ENCODE measurements at regions of chr10 and their contacts with region 1.

Region 1: DNA sequence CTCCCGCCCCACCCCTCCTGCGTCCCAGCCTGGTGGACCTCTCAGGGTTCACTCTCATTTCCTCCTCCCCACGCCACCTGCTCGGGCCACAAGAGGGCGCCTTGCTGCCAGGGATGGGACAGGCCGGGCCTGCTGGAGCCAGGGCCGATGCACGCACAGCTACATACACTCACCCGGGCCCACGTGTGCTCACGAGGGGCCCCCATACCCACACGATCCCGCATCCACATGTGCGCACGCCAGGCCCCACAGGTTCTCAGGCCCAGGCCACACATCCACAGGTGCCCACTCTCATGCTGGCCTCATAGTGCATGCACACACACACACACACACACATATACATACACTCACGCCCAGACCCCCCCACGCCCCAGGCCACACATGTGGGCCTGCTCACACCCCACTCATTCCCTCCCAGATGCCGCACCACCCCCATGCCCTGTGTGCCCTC is 68.6 kb downstream of the LHPP start:
- DNase-seq: peak; percentile 91
- H3K4me3 Mint-ChIP-seq: no peak overlapping the region
- H3K27ac Mint-ChIP-seq: no peak overlapping the region
- H3K4me1 Mint-ChIP-seq: peaks cover 6% of the 10 kb centered on the region
- H3K27me3 Mint-ChIP-seq: no peaks in the 10 kb centered on the region

Region 2: GRCh38 chr10:124612611-124613498 is 82.6 kb after region 1 on chr10:
- CTCF ChIA-PET with region 1: interaction called, 3 read pairs
- POLR2A ChIA-PET with region 1: no interaction called
- intact Hi-C with region 1: loop called (anchors 5 kb)
- DNase-seq: peak; percentile 39
- H3K4me3 Mint-ChIP-seq: no peak overlapping the region
- H3K27ac Mint-ChIP-seq: no peak overlapping the region
- H3K4me1 Mint-ChIP-seq: peaks cover 34% of the 10 kb centered on the region
- H3K27me3 Mint-ChIP-seq: no peaks in the 10 kb centered on the region

Region 3: GRCh38 chr10:124641282-124642087 is 111.2 kb after region 1 on chr10:
- CTCF ChIA-PET with region 1: no interaction called
- POLR2A ChIA-PET with region 1: no interaction called
- intact Hi-C with region 1: no loop called
- DNase-seq: peak; percentile 76
- H3K4me3 Mint-ChIP-seq: peak overlapping the region; percentile 54
- H3K27ac Mint-ChIP-seq: peak overlapping the region; percentile 94
- H3K4me1 Mint-ChIP-seq: peaks cover 78% of the 10 kb centered on the region
- H3K27me3 Mint-ChIP-seq: no peaks in the 10 kb centered on the region

Region 4: DNA sequence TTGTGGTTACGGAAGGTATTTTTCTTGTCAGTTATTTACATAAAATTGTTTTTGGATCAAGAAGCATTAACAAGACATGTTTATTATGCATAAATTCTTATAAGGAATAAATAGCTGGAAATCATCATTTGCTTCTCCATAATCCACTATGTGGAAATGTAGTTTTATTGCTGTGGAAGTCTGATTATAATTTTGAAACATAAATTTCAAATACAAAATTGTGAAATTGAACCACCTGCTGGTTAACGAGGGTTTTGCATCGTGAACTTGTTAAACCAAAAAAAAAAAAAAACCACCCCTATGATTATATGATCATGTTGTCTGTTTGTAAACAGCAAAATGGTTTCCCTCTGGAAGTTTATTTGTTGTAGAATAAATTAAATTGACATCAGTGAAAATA is 297.2 kb after region 1 on chr10:
- CTCF ChIA-PET with region 1: interaction called, 16 read pairs
- POLR2A ChIA-PET with region 1: no interaction called
- intact Hi-C with region 1: loop called (anchors 2 kb)
- DNase-seq: no peak
- H3K4me3 Mint-ChIP-seq: no peak overlapping the region
- H3K27ac Mint-ChIP-seq: no peak overlapping the region
- H3K4me1 Mint-ChIP-seq: peaks cover 3% of the 10 kb centered on the region
- H3K27me3 Mint-ChIP-seq: no peaks in the 10 kb centered on the region

Region 5: GRCh38 chr10:125060826-125061556 is 530.8 kb after region 1 on chr10:
- CTCF ChIA-PET with region 1: no interaction called
- POLR2A ChIA-PET with region 1: no interaction called
- intact Hi-C with region 1: loop called (anchors 10 kb)
- DNase-seq: peak; percentile 64
- H3K4me3 Mint-ChIP-seq: no peak overlapping the region
- H3K27ac Mint-ChIP-seq: no peak overlapping the region
- H3K4me1 Mint-ChIP-seq: peaks cover 15% of the 10 kb centered on the region
- H3K27me3 Mint-ChIP-seq: peaks cover 45% of the 10 kb centered on the region